ENCODE measurements at regions of chr10 and their contacts with region 1.

Region 1: DNA sequence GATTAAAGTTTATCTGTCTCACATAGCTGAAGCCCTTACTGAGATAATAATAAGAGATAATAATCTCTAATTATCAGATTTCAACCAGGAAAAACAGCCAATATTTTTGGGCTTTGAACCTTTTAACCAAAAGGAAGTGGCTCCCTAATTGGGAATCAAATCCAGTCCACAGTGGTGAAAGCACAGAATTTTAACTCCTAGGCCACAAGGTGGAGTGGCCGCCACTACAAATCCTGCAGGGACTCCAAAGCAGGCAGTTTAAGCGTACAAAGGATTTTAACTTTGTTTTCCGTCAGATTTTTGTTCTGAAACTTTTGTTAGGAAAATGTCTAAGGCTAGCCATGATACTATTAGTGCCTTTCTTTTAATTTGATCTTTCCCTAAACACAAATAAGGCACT is 99.6 kb upstream of the CCNY start:
- DNase-seq: no peak
- ATAC-seq: no peak
- H3K4me3 ChIP-seq: no peak overlapping the region
- H3K27ac ChIP-seq: no peak overlapping the region
- H3K4me1 ChIP-seq: no peaks in the 10 kb centered on the region
- H3K27me3 ChIP-seq: no peaks in the 10 kb centered on the region
- CTCF ChIP-seq: no peak

Region 2: GRCh38 chr10:35555962-35556930 is 319.5 kb after region 1 on chr10:
- intact Hi-C with region 1: loop called in 1 of 2 experiments (anchors 2 kb)
- DNase-seq: no peak
- ATAC-seq: peak; percentile 68 to 79 (median 74)
- H3K4me3 ChIP-seq: no peak overlapping the region
- H3K27ac ChIP-seq: peak overlapping the region; percentile 38
- H3K4me1 ChIP-seq: peaks cover 33% of the 10 kb centered on the region
- H3K27me3 ChIP-seq: no peaks in the 10 kb centered on the region
- CTCF ChIP-seq: no peak

Region 3: GRCh38 chr10:35594115-35595079 is 357.7 kb after region 1 on chr10:
- intact Hi-C with region 1: no loop called
- DNase-seq: no peak
- ATAC-seq: no peak
- H3K4me3 ChIP-seq: no peak overlapping the region
- H3K27ac ChIP-seq: no peak overlapping the region
- H3K4me1 ChIP-seq: no peaks in the 10 kb centered on the region
- H3K27me3 ChIP-seq: no peaks in the 10 kb centered on the region
- CTCF ChIP-seq: no peak

Measured in psoas muscle (tissue), 8 donors.